ENCODE measurements at regions of chrX and their contacts with region 1.

Region 1: GRCh38 chrX:56813318-56813837 is 84.3 kb downstream of the NBDY start:
- DNase-seq: peak in 8 of 9 experiments; percentile 27 to 88 (median 59)
- ATAC-seq: peak; percentile 79
- H3K4me3 ChIP-seq: peak overlapping the region; percentile 0 to 12
- H3K4me3 Mint-ChIP-seq: peak overlapping the region; percentile 78
- H3K27ac ChIP-seq: peak overlapping the region; percentile 57 to 90
- H3K27ac Mint-ChIP-seq: peak overlapping the region; percentile 98
- H3K4me1 ChIP-seq: peaks cover 26% of the 10 kb centered on the region
- H3K4me1 Mint-ChIP-seq: peaks cover 43% of the 10 kb centered on the region
- H3K27me3 ChIP-seq: no peaks in the 10 kb centered on the region
- H3K27me3 Mint-ChIP-seq: no peaks in the 10 kb centered on the region
- CTCF ChIP-seq: no peak

Region 2: GRCh38 chrX:57121162-57121741 is 307.9 kb after region 1 on chrX and contains the start of gene SPIN2B:
- CTCF ChIA-PET with region 1: no interaction called
- POLR2A ChIA-PET with region 1: no interaction called
- intact Hi-C with region 1: loop called (anchors 5 kb)
- DNase-seq: peak; percentile 43 to 89 (median 75)
- ATAC-seq: peak; percentile 99
- H3K4me3 ChIP-seq: peak within 1 kb of the TSS; percentile 60 to 77
- H3K4me3 Mint-ChIP-seq: peak within 1 kb of the TSS; percentile 94
- H3K27ac ChIP-seq: peak within 1 kb of the TSS; percentile 40 to 53
- H3K27ac Mint-ChIP-seq: peak within 1 kb of the TSS; percentile 89
- H3K4me1 ChIP-seq: peaks cover 4% of the 10 kb centered on the region
- H3K4me1 Mint-ChIP-seq: peaks cover 13% of the 10 kb centered on the region
- H3K27me3 ChIP-seq: no peaks in the 10 kb centered on the region
- H3K27me3 Mint-ChIP-seq: no peaks in the 10 kb centered on the region
- CTCF ChIP-seq: no peak
- total RNA-seq, gene SPIN2B: 8.1 to 8.6 TPM